Mammary epithelial cell (primary cell): ENCODE measurements at regions of chr20 and their contacts with region 1.

Region 1: GRCh38 chr20:21303061-21303871 is at the start of gene XRN2:
- DNase-seq: peak; percentile 95
- H3K4me3 ChIP-seq: peak within 1 kb of the TSS; percentile 64 to 92 (median 83)
- H3K27ac ChIP-seq: peak within 1 kb of the TSS; percentile 79
- H3K4me1 ChIP-seq: peaks cover 9% of the 10 kb centered on the region
- H3K27me3 ChIP-seq: no peaks in the 10 kb centered on the region
- CTCF ChIP-seq: peak in 1 of 2 donors; percentile 19
- total RNA-seq, gene XRN2: 64.9 to 70.8 TPM

Region 2: GRCh38 chr20:20037960-20038359 is 1265.3 kb before region 1 on chr20:
- CTCF ChIA-PET with region 1: no interaction called
- dilution Hi-C with region 1: no loop called
- in situ Hi-C with region 1: loop called in 1 of 2 experiments (anchors 25 kb)
- intact Hi-C with region 1: no loop called
- DNase-seq: no peak
- H3K4me3 ChIP-seq: no peak overlapping the region
- H3K27ac ChIP-seq: no peak overlapping the region
- H3K4me1 ChIP-seq: no peaks in the 10 kb centered on the region
- H3K27me3 ChIP-seq: no peaks in the 10 kb centered on the region
- CTCF ChIP-seq: no peak

Region 3: GRCh38 chr20:21147593-21147992 is 155.7 kb before region 1 on chr20:
- CTCF ChIA-PET with region 1: no interaction called
- dilution Hi-C with region 1: no loop called
- in situ Hi-C with region 1: no loop called
- intact Hi-C with region 1: no loop called
- DNase-seq: peak; percentile 64
- H3K4me3 ChIP-seq: no peak overlapping the region
- H3K27ac ChIP-seq: no peak overlapping the region
- H3K4me1 ChIP-seq: no peaks in the 10 kb centered on the region
- H3K27me3 ChIP-seq: no peaks in the 10 kb centered on the region
- CTCF ChIP-seq: no peak

Region 4: GRCh38 chr20:21395666-21396598 is 92.7 kb after region 1 on chr20:
- CTCF ChIA-PET with region 1: interaction called, 16 read pairs
- dilution Hi-C with region 1: no loop called
- in situ Hi-C with region 1: no loop called
- intact Hi-C with region 1: loop called (anchors 5 kb)
- DNase-seq: peak; percentile 25
- H3K4me3 ChIP-seq: no peak overlapping the region
- H3K27ac ChIP-seq: no peak overlapping the region
- H3K4me1 ChIP-seq: peaks cover 9% of the 10 kb centered on the region
- H3K27me3 ChIP-seq: peaks cover 46% of the 10 kb centered on the region
- CTCF ChIP-seq: no peak